ENCODE measurements at regions of chr14 and their contacts with region 1.

Region 1: GRCh38 chr14:23095196-23096108 is at the start of gene C14orf119:
- DNase-seq: peak; percentile 100
- ATAC-seq: peak; percentile 92
- H3K4me3 ChIP-seq: peak within 1 kb of the TSS; percentile 71 to 96 (median 95)
- H3K27ac ChIP-seq: peak within 1 kb of the TSS; percentile 89
- H3K4me1 ChIP-seq: peaks cover 37% of the 10 kb centered on the region
- H3K27me3 ChIP-seq: no peaks in the 10 kb centered on the region; a peak in 1 of 5 replicates
- CTCF ChIP-seq: peak; percentile 16; the same call in 1 of the 2 replicates
- EP300 ChIP-seq: no peak; a peak in 2 of 4 replicates
- POLR2A ChIP-seq: peak in 1 of 2 experiments; percentile 55; a peak in 2 of 4 replicates
- RAD21 ChIP-seq: peak; percentile 42; the same call in 1 of the 2 replicates
- total RNA-seq, gene C14orf119: 206 and 299 TPM in 2 replicates

Region 2: GRCh38 chr14:22589096-22589839 is 506.2 kb before region 1 on chr14 and contains the start of gene DAD1:
- CTCF ChIA-PET with region 1: no interaction called
- POLR2A ChIA-PET with region 1: interaction called, 10 read pairs
- in situ Hi-C with region 1: no loop called
- intact Hi-C with region 1: no loop called
- DNase-seq: peak; percentile 100
- ATAC-seq: peak; percentile 98
- H3K4me3 ChIP-seq: peak within 1 kb of the TSS; percentile 85 to 92 (median 86)
- H3K27ac ChIP-seq: peak within 1 kb of the TSS; percentile 80
- H3K4me1 ChIP-seq: peaks cover 52% of the 10 kb centered on the region
- H3K27me3 ChIP-seq: peaks cover 0 to 23% of the 10 kb centered on the region in 2 experiments; a peak in 2 of 5 replicates
- CTCF ChIP-seq: no peak
- EP300 ChIP-seq: 0 out of 4 replicates have a peak, but pooled peaks of 1 of the 2 experiments have one; percentile 19
- POLR2A ChIP-seq: peak in 1 of 2 experiments; percentile 97; a peak in 2 of 4 replicates
- RAD21 ChIP-seq: peak; percentile 67; the same call in 1 of the 2 replicates
- total RNA-seq, gene DAD1: 385 and 558 TPM in 2 replicates

Region 3: DNA sequence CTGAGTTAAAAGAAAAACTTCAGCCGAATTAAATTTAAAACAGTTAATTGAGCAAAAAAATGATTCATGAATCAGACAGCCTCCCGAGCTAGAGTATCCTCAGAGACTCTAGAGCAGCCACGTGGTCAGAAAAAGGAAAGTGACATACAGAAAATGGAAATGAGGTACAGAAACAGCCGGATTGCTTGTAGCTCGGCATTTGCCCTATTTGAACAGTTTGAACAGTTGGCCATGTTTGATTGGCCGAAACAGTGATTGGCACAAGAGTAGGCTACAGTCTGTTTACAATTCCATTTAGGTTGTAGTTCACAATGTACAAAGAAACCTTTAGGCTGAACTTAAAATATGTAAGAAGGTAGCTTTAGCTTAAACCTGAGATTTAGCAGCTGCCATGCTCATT is 341.9 kb before region 1 on chr14:
- CTCF ChIA-PET with region 1: no interaction called
- POLR2A ChIA-PET with region 1: no interaction called
- in situ Hi-C with region 1: no loop called
- intact Hi-C with region 1: no loop called
- DNase-seq: peak; percentile 56
- ATAC-seq: peak; percentile 62
- H3K4me3 ChIP-seq: no peak overlapping the region; a peak in 1 of 6 replicates
- H3K27ac ChIP-seq: no peak overlapping the region
- H3K4me1 ChIP-seq: peaks cover 24% of the 10 kb centered on the region
- H3K27me3 ChIP-seq: peaks cover 0 to 8% of the 10 kb centered on the region in 2 experiments; a peak in 1 of 5 replicates
- CTCF ChIP-seq: no peak
- EP300 ChIP-seq: no peak
- POLR2A ChIP-seq: no peak
- RAD21 ChIP-seq: no peak

Region 4: GRCh38 chr14:22955702-22956569 is 139.5 kb before region 1 on chr14:
- CTCF ChIA-PET with region 1: no interaction called
- POLR2A ChIA-PET with region 1: interaction called, 13 read pairs
- in situ Hi-C with region 1: no loop called
- intact Hi-C with region 1: no loop called
- DNase-seq: peak; percentile 48
- ATAC-seq: peak; percentile 27
- H3K4me3 ChIP-seq: peak overlapping the region; percentile 73 to 78 (median 77)
- H3K27ac ChIP-seq: peak overlapping the region; percentile 78
- H3K4me1 ChIP-seq: peaks cover 47% of the 10 kb centered on the region
- H3K27me3 ChIP-seq: no peaks in the 10 kb centered on the region; a peak in 1 of 5 replicates
- CTCF ChIP-seq: no peak
- EP300 ChIP-seq: peak in 1 of 2 experiments; percentile 25; a peak in 1 of 4 replicates
- POLR2A ChIP-seq: no peak
- RAD21 ChIP-seq: no peak

Region 5: DNA sequence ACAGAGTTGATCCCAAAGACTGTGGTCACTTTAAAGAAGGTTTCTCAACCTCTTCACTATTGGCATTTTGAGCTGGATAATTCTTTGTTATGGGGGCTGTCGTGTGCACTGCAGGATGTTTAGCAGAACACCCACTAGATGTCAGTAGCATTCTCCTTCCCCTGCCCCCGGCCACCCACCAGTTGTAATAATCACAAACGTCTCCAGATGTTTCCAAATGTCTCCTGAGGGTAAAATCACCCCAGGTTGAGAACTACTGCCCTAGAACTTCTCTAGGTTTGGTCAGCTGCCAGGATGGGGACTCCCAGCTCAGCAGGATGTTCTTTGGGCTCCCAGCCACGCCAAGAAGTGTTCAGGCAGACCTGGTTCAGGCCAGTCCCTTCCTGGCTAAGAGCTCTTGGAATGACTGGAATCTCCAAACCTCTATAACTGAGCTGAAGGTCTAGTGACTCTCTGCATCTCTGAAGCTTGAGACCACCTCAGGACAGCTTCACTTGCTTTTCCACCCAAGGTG is 100.6 kb before region 1 on chr14:
- CTCF ChIA-PET with region 1: no interaction called
- POLR2A ChIA-PET with region 1: interaction called, 12 read pairs
- in situ Hi-C with region 1: no loop called
- intact Hi-C with region 1: no loop called
- DNase-seq: peak; percentile 67
- ATAC-seq: peak; percentile 94
- H3K4me3 ChIP-seq: no peak overlapping the region
- H3K27ac ChIP-seq: no peak overlapping the region
- H3K4me1 ChIP-seq: peaks cover 5% of the 10 kb centered on the region; the same call in 1 of the 2 replicates
- H3K27me3 ChIP-seq: no peaks in the 10 kb centered on the region
- CTCF ChIP-seq: peak; percentile 90
- EP300 ChIP-seq: no peak
- POLR2A ChIP-seq: no peak
- RAD21 ChIP-seq: peak; percentile 87

Region 6: GRCh38 chr14:23063637-23064036 is 31.8 kb before region 1 on chr14:
- CTCF ChIA-PET with region 1: interaction called, 20 read pairs
- POLR2A ChIA-PET with region 1: interaction called, 80 read pairs
- in situ Hi-C with region 1: no loop called
- intact Hi-C with region 1: no loop called
- DNase-seq: no peak
- ATAC-seq: no peak
- H3K4me3 ChIP-seq: no peak overlapping the region
- H3K27ac ChIP-seq: no peak overlapping the region
- H3K4me1 ChIP-seq: peaks cover 15% of the 10 kb centered on the region
- H3K27me3 ChIP-seq: no peaks in the 10 kb centered on the region
- CTCF ChIP-seq: no peak
- EP300 ChIP-seq: no peak
- POLR2A ChIP-seq: peak in 1 of 2 experiments; percentile 15; a peak in 1 of 4 replicates
- RAD21 ChIP-seq: no peak

Region 7: GRCh38 chr14:23120541-23121251 is 25.2 kb after region 1 on chr14:
- CTCF ChIA-PET with region 1: interaction called, 7 read pairs
- POLR2A ChIA-PET with region 1: interaction called, 17 read pairs
- in situ Hi-C with region 1: no loop called
- intact Hi-C with region 1: no loop called
- DNase-seq: peak; percentile 93
- ATAC-seq: peak; percentile 83
- H3K4me3 ChIP-seq: no peak overlapping the region
- H3K27ac ChIP-seq: no peak overlapping the region
- H3K4me1 ChIP-seq: peaks cover 22% of the 10 kb centered on the region
- H3K27me3 ChIP-seq: peaks cover 47 to 93% of the 10 kb centered on the region in 2 experiments
- CTCF ChIP-seq: peak; percentile 100
- EP300 ChIP-seq: no peak
- POLR2A ChIP-seq: no peak
- RAD21 ChIP-seq: peak; percentile 100

Region 8: GRCh38 chr14:23141671-23142451 is 46.4 kb after region 1 on chr14:
- CTCF ChIA-PET with region 1: no interaction called
- POLR2A ChIA-PET with region 1: no interaction called
- in situ Hi-C with region 1: no loop called
- intact Hi-C with region 1: no loop called
- DNase-seq: no peak
- ATAC-seq: no peak
- H3K4me3 ChIP-seq: no peak overlapping the region
- H3K27ac ChIP-seq: no peak overlapping the region
- H3K4me1 ChIP-seq: peaks cover 10% of the 10 kb centered on the region
- H3K27me3 ChIP-seq: peaks cover 7 to 62% of the 10 kb centered on the region in 2 experiments
- CTCF ChIP-seq: no peak
- EP300 ChIP-seq: no peak
- POLR2A ChIP-seq: no peak
- RAD21 ChIP-seq: no peak

Region 9: GRCh38 chr14:23320774-23321571 is 225.5 kb after region 1 on chr14 and contains the start of gene PABPN1:
- CTCF ChIA-PET with region 1: no interaction called
- POLR2A ChIA-PET with region 1: interaction called, 78 read pairs
- in situ Hi-C with region 1: no loop called
- intact Hi-C with region 1: no loop called
- DNase-seq: peak; percentile 100
- ATAC-seq: peak; percentile 94
- H3K4me3 ChIP-seq: peak within 1 kb of the TSS; percentile 79 to 99 (median 98)
- H3K27ac ChIP-seq: peak within 1 kb of the TSS; percentile 95
- H3K4me1 ChIP-seq: peaks cover 36% of the 10 kb centered on the region
- H3K27me3 ChIP-seq: peaks cover 0 to 6% of the 10 kb centered on the region in 2 experiments; a peak in 2 of 5 replicates
- CTCF ChIP-seq: peak; percentile 10
- EP300 ChIP-seq: peak; percentile 68 to 90; a peak in 3 of 4 replicates
- POLR2A ChIP-seq: peak in 1 of 2 experiments; percentile 91; a peak in 2 of 4 replicates
- RAD21 ChIP-seq: peak; percentile 67
- total RNA-seq, gene PABPN1: 173 and 233 TPM in 2 replicates